ENCODE measurements at regions of chr3 and their contacts with region 1.

Region 1: DNA sequence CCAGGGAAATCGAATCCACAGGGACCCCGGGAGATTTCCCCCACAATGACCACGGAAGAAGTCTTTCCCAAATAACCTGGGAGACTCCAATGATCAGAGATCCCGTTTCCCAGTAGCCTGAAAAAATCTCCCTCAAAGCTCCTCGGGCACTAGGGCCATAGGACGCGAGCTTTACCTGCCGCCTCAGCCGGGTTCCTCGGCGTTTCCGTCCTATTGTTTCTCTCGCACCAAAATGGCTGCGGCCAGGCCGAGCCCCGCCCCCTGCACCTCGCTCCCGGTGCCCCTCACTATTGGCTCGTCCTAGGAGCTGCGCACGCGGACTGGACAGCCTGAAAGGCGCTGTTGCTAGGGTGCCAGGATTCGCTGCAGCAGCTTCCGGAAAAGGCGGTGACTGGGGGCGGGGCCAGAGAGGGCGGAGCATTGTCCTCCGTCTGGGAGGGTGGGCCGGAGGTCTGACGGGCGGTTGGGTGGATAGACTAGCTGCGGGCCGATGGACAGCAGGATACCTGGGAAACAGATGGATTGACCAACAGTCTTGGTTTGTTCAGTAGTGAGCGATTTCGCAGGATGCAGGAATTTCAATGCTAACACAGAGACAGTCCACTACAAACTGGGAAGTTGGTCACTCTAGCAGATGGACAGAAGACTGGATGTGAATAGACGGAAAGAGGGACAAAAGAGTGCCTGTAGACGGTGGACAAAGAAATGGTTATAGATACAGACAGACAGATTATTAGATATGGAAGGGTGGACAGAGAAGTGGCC is at the start of gene IP6K2:
- DNase-seq: peak; percentile 99
- ATAC-seq: peak; percentile 100
- H3K4me3 Mint-ChIP-seq: peak within 1 kb of the TSS; percentile 97
- H3K27ac Mint-ChIP-seq: peak within 1 kb of the TSS; percentile 97
- H3K4me1 Mint-ChIP-seq: peaks cover 31% of the 10 kb centered on the region
- H3K27me3 Mint-ChIP-seq: no peaks in the 10 kb centered on the region
- total RNA-seq, gene IP6K2: 39.4 to 48.3 TPM

Region 2: DNA sequence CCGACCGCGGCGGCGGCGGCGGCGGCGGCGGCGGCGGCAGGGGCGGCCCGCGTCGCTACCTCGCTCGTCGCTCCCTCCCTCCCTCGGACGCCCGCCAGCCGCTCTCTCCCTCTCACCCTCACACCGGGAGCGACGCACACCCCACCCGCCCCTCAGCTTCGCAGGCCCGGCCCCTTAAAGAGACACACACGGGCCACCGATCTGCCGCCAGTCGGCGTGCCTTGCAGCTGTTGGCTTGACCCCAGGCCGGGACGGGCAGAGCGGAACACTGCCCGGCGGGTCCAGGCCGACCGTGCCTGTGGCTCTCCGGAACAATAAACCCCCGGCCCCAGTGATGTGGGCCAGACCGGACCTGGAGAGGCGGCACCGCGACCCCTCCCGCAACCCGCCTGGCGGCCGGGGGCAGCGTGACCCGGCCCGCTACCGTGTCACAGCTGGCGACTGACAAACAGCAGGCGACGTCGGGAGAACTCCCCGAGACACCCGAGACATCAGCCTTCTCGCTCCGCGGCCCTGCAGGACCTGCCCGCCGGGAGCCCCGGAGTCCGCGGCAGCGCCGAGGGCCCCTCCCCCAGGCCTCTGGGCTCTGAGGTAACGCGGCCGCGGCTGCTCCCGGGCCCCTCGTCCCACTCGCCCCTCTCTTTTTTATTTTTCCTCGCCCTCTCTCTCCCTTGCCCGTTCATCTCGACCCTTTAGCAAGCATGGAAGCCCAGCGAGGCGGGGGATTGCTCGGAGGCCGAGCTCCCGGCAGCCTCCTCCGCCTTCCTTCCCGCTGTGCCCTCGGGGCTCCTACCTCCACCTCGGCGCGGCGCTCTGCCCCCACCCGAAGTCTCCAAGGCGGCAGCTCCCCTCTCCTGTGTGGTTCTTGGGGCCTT is 1552.9 kb before region 1 on chr3 and contains the start of gene SETD2:
- CTCF ChIA-PET with region 1: no interaction called
- POLR2A ChIA-PET with region 1: interaction called, 5 read pairs
- intact Hi-C with region 1: loop called in 1 of 2 experiments (anchors 5 kb)
- DNase-seq: peak; percentile 94
- ATAC-seq: peak; percentile 86
- H3K4me3 Mint-ChIP-seq: peak within 1 kb of the TSS; percentile 97
- H3K27ac Mint-ChIP-seq: peak within 1 kb of the TSS; percentile 99
- H3K4me1 Mint-ChIP-seq: peaks cover 40% of the 10 kb centered on the region
- H3K27me3 Mint-ChIP-seq: no peaks in the 10 kb centered on the region
- total RNA-seq, gene SETD2: 31.8 to 35.8 TPM

Region 3: DNA sequence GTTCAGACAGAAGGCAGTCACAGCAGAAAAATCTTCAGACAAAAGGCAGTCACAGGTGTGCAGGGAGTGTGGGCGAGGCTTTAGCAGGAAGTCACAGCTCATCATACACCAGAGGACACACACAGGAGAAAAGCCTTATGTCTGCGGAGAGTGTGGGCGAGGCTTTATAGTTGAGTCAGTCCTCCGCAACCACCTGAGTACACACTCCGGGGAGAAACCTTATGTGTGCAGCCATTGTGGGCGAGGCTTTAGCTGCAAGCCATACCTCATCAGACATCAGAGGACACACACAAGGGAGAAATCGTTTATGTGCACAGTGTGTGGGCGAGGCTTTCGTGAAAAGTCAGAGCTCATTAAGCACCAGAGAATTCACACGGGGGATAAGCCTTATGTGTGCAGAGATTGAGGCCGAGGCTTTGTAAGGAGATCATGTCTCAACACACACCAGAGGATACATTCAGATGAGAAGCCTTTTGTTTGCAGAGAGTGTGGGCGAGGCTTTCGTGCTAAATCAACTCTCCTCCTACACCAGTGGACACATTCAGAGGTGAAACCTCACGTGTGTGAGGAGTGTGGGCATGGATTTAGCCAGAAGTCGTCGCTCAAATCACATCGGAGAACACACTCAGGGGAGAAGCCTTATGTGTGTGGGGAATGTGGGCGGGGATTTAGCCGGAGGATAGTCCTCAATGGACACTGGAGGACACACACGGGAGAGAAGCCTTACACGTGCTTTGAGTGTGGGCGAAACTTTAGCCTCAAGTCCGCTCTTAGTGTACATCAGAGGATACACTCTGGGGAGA is 448.6 kb before region 1 on chr3:
- CTCF ChIA-PET with region 1: no interaction called
- POLR2A ChIA-PET with region 1: interaction called, 3 read pairs
- intact Hi-C with region 1: loop called in 1 of 2 experiments (anchors 1 kb)
- DNase-seq: peak; percentile 95
- ATAC-seq: peak; percentile 91
- H3K4me3 Mint-ChIP-seq: peak overlapping the region; percentile 57
- H3K27ac Mint-ChIP-seq: peak overlapping the region; percentile 92
- H3K4me1 Mint-ChIP-seq: peaks cover 39% of the 10 kb centered on the region
- H3K27me3 Mint-ChIP-seq: no peaks in the 10 kb centered on the region

Region 4: DNA sequence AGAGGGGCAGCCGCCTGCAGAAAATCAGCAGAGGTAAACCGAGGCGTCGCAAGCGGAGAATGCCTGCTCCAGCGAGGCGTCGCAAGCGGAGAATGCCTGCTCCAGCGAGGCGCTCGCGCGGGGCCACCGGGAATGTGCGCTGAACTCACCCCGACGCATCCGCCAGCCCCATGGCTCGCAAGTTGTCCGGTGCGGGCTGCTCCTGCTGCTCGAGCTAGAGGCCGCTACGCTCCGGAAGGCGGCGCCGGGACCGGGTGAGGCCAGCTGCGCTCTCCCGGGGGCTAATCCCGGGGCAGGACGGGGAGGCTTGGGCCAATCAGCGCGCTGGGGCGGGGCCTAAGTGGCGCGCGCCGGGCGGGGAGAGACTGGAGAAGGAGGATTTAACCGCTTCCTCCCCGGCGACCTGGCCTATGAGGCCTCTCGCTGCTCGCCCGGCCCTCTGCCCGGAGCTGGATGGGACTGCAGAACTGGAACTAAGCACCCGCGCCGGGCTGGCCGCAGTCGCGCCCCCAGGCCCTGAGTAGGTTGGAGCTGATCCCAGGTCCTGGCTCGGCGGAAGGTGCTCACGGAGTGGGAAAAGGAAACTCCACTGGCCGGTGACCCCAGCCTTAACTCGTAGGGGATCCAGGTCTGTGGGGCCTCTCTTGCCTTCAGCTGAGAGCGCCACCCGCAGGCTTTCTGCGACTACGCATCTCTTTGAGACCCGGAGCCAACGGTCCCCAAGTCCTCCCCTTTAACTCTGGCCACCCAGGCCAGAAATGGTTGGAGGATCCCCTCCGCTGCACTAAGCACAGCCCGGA is 81.7 kb before region 1 on chr3 and contains the start of gene SLC26A6:
- CTCF ChIA-PET with region 1: no interaction called
- POLR2A ChIA-PET with region 1: no interaction called
- intact Hi-C with region 1: loop called in 1 of 2 experiments (anchors 1 kb)
- DNase-seq: peak; percentile 97
- ATAC-seq: peak; percentile 97
- H3K4me3 Mint-ChIP-seq: peak within 1 kb of the TSS; percentile 84
- H3K27ac Mint-ChIP-seq: peak within 1 kb of the TSS; percentile 76
- H3K4me1 Mint-ChIP-seq: peaks cover 13% of the 10 kb centered on the region
- H3K27me3 Mint-ChIP-seq: no peaks in the 10 kb centered on the region
- total RNA-seq, gene SLC26A6: 35.0 to 38.5 TPM

Region 5: DNA sequence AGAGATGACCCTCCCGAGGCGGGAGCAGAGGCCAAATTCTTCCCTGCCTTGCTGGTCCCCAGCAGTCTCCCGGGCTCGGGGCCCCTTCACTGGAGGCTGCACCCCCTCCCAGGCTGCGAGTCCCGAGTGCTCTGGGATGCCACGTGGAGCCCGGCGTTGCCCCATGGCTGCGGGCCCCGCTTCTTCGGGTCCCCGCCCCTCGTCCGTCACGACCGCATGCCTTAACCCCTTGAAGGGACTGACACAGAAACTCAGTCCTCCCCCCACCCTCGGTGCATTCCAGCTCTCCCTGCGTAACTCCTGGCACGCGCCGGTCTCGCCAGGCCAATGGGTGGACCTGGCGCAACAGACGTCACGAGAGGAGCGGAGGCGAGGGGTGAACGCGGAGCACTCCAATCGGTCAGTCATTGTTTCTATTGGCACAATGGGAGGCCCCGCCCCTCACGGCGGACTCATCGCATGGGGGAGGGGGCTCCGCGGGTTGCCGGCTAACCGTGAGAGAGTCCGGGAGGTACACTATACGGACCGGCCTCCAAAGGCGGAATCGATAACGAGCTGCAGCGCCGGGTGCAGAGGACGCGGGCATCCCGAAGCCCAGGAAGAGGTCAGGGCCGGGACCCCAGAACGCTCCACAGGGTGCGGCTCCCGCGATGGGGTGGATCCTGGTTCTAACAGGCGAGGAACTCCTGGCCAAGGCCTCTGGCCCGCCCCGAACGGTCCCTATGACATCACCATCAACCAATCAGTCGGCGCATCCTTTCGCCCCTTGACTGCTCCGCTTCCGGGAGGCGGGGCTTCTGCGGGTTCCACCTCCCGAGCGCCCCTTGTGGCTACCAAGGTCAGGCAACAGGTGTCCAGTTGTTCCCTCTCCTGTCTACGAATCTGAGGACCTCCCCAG is 53.5 kb before region 1 on chr3:
- CTCF ChIA-PET with region 1: no interaction called
- POLR2A ChIA-PET with region 1: interaction called, 6 read pairs
- intact Hi-C with region 1: loop called in 1 of 2 experiments (anchors 1 kb)
- DNase-seq: peak; percentile 96
- ATAC-seq: peak; percentile 91
- H3K4me3 Mint-ChIP-seq: peak overlapping the region; percentile 81
- H3K27ac Mint-ChIP-seq: peak overlapping the region; percentile 93
- H3K4me1 Mint-ChIP-seq: peaks cover 16% of the 10 kb centered on the region
- H3K27me3 Mint-ChIP-seq: peaks cover 28% of the 10 kb centered on the region

Region 6: DNA sequence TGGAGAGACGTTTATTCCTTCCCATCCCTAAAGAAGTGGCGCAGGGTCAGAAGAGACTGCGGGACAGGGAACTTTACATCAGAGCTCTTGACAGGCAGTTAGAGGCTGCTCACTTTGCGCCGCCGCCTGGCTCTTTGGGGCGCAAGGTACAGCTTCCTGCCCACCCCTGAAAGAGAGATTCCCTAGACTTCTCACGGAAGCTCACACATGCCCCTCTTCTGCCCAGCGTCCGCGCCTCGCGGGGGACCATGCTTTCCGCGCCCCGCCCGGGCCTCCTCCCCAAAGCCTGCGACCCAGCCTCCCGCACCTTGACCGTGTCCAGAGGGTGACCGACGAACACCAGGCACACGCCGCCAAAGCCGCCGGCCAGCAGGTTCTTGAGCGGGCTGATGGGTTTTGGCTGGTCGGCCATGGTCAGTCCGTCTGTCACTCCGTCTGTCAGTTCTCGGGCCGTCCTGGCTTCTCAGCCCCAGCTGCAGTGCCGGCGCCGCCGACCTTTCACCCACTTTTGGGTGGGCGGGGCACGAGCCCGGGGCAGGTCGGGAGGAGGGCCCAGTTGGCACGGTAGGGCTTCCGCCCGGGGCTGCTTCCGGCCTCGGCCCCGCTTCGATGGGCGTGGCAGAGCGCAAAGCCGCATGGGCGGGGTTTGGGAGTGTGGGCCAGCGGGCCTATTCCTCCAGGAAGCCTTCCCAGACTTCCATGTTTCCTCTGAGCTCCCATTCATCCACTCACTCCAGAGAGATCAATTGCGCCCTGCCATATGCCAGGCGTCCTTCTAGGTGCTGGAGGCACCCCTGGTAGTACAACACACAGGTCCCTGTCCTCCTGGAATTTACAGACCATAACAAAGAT is 181.4 kb after region 1 on chr3 and contains the start of gene SLC25A20:
- CTCF ChIA-PET with region 1: interaction called, 3 read pairs
- POLR2A ChIA-PET with region 1: no interaction called
- intact Hi-C with region 1: loop called in 1 of 2 experiments (anchors 1 kb)
- DNase-seq: peak; percentile 96
- ATAC-seq: peak; percentile 96
- H3K4me3 Mint-ChIP-seq: peak within 1 kb of the TSS; percentile 90
- H3K27ac Mint-ChIP-seq: peak within 1 kb of the TSS; percentile 92
- H3K4me1 Mint-ChIP-seq: peaks cover 30% of the 10 kb centered on the region
- H3K27me3 Mint-ChIP-seq: no peaks in the 10 kb centered on the region
- total RNA-seq, gene SLC25A20: 15.8 to 18.5 TPM

Region 7: GRCh38 chr3:49120438-49121131 is 403.4 kb after region 1 on chr3 and contains the start of gene USP19:
- CTCF ChIA-PET with region 1: no interaction called
- POLR2A ChIA-PET with region 1: interaction called, 4 read pairs
- intact Hi-C with region 1: loop called in 1 of 2 experiments (anchors 1 kb)
- DNase-seq: peak; percentile 97
- ATAC-seq: peak; percentile 97
- H3K4me3 Mint-ChIP-seq: peak within 1 kb of the TSS; percentile 87
- H3K27ac Mint-ChIP-seq: peak within 1 kb of the TSS; percentile 88
- H3K4me1 Mint-ChIP-seq: peaks cover 19% of the 10 kb centered on the region
- H3K27me3 Mint-ChIP-seq: no peaks in the 10 kb centered on the region
- total RNA-seq, gene USP19: 45.2 to 45.9 TPM

Measured in activated CD4-positive, alpha-beta T cell treated with anti-CD3 and anti-CD28 coated beads for 36 hours (primary cell).